Heart left ventricle (tissue), 16 donors: ENCODE measurements at regions of chr10 and their contacts with region 1.

Region 1: GRCh38 chr10:72058989-72059842 is 29.1 kb downstream of the SPOCK2 start:
- DNase-seq: no peak
- ATAC-seq: no peak
- H3K4me3 ChIP-seq: no peak overlapping the region
- H3K27ac ChIP-seq: peak overlapping the region in 2 of 12 donors; percentile 20 to 57
- H3K4me1 ChIP-seq: peaks cover 0 to 19% (median 7%) of the 10 kb centered on the region in 12 donors
- H3K27me3 ChIP-seq: no peaks in the 10 kb centered on the region
- CTCF ChIP-seq: no peak
- POLR2A ChIP-seq: no peak

Region 2: GRCh38 chr10:71319042-71319799 is 740.0 kb before region 1 on chr10 and contains the start of gene SLC29A3:
- intact Hi-C with region 1: no loop called
- DNase-seq: peak; percentile 81 to 92 (median 83)
- ATAC-seq: peak; percentile 56 to 95 (median 90)
- H3K4me3 ChIP-seq: peak within 1 kb of the TSS; percentile 61 to 98 (median 78)
- H3K27ac ChIP-seq: peak within 1 kb of the TSS in 11 of 12 donors; percentile 26 to 83 (median 76)
- H3K4me1 ChIP-seq: peaks cover 0 to 34% (median 11%) of the 10 kb centered on the region in 12 donors
- H3K27me3 ChIP-seq: no peaks in the 10 kb centered on the region
- CTCF ChIP-seq: peak; percentile 23 to 68 (median 49)
- POLR2A ChIP-seq: peak in 1 of 2 donors; percentile 82
- total RNA-seq, gene SLC29A3: 0.76 to 6.2 (median 1.8) TPM

Region 3: GRCh38 chr10:71727738-71728737 is 331.2 kb before region 1 on chr10:
- intact Hi-C with region 1: no loop called
- DNase-seq: peak in 4 of 5 donors; percentile 69 to 86 (median 72)
- ATAC-seq: peak; percentile 60 to 80 (median 69)
- H3K4me3 ChIP-seq: peak overlapping the region in 1 of 12 donors; percentile 0
- H3K27ac ChIP-seq: peak overlapping the region; percentile 18 to 95 (median 76)
- H3K4me1 ChIP-seq: peaks cover 0 to 65% (median 35%) of the 10 kb centered on the region in 12 donors
- H3K27me3 ChIP-seq: no peaks in the 10 kb centered on the region
- CTCF ChIP-seq: no peak
- POLR2A ChIP-seq: no peak

Region 4: GRCh38 chr10:71740069-71740468 is 319.1 kb before region 1 on chr10:
- intact Hi-C with region 1: no loop called
- DNase-seq: peak in 2 of 5 donors; percentile 58 to 76
- ATAC-seq: peak in 3 of 4 donors; percentile 49 to 58 (median 50)
- H3K4me3 ChIP-seq: no peak overlapping the region
- H3K27ac ChIP-seq: peak overlapping the region in 1 of 12 donors; percentile 67
- H3K4me1 ChIP-seq: peaks cover 0 to 99% (median 13%) of the 10 kb centered on the region in 12 donors
- H3K27me3 ChIP-seq: no peaks in the 10 kb centered on the region
- CTCF ChIP-seq: peak in 1 of 12 donors; percentile 8
- POLR2A ChIP-seq: no peak

Region 5: GRCh38 chr10:72107325-72108003 is 48.2 kb after region 1 on chr10:
- intact Hi-C with region 1: loop called in 3 of 10 experiments (anchors 5 to 10 kb)
- DNase-seq: no peak
- ATAC-seq: no peak
- H3K4me3 ChIP-seq: no peak overlapping the region
- H3K27ac ChIP-seq: peak overlapping the region in 3 of 12 donors; percentile 2 to 71 (median 57)
- H3K4me1 ChIP-seq: peaks cover 0 to 45% (median 25%) of the 10 kb centered on the region in 12 donors
- H3K27me3 ChIP-seq: no peaks in the 10 kb centered on the region
- CTCF ChIP-seq: no peak
- POLR2A ChIP-seq: no peak

Region 6: GRCh38 chr10:72215652-72216549 is 156.7 kb after region 1 on chr10 and contains the starts of genes ANAPC16 and ASCC1:
- intact Hi-C with region 1: loop called in 6 of 10 experiments (anchors 5 to 10 kb)
- DNase-seq: peak; percentile 91 to 96 (median 93)
- ATAC-seq: peak; percentile 92 to 99 (median 98)
- H3K4me3 ChIP-seq: peak within 1 kb of the TSS; percentile 62 to 91 (median 72)
- H3K27ac ChIP-seq: peak within 1 kb of the TSS; percentile 91 to 100 (median 98)
- H3K4me1 ChIP-seq: peaks cover 9 to 54% (median 38%) of the 10 kb centered on the region in 12 donors
- H3K27me3 ChIP-seq: no peaks in the 10 kb centered on the region
- CTCF ChIP-seq: peak in 1 of 12 donors; percentile 5
- POLR2A ChIP-seq: peak; percentile 41 to 92
- total RNA-seq, gene ANAPC16: 135 to 237 (median 179) TPM
- total RNA-seq, gene ASCC1: 26.4 to 44.8 (median 35.3) TPM

Region 7: DNA sequence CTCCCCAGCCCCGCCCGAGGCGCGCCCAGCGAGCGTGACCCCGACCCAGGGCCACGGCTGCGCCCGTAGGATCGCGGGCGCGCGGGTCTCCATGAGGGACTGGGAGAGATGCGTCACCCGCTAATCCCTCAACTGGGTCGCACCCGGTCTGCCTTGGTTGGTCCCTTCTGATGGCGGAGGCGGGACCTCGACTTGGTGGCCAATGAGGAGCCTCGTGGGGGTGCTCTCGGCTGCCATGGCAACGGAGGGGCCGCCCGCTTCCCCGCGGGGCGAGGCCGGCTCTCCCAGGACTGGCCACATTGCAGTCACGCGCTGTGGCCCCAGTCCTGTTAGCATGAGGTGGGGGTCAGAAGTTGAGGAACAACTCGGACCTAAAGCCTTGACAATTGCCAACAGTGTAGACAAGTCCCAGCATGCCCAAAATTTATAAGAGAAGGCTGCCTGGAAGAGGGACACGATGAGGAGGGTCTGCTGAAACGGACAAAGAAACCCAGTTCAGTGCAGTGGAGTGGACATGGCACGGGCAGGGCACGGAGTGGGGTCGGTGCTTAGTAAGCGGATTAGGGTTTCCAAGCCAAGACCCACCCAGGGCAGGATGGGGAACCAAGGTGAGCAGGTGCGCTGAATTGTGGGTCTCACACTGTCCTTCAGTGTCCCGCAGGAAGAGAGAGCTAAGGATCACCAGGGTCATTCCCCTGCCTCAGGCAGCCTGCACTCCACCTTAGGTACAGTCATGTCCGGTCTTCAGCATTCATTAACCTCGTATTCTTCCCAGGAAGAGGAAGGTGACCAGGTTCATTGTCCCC is 239.0 kb after region 1 on chr10:
- intact Hi-C with region 1: no loop called
- DNase-seq: peak; percentile 98 to 100 (median 99)
- ATAC-seq: peak; percentile 94 to 98 (median 96)
- H3K4me3 ChIP-seq: peak overlapping the region; percentile 42 to 92 (median 70)
- H3K27ac ChIP-seq: peak overlapping the region; percentile 79 to 99 (median 93)
- H3K4me1 ChIP-seq: peaks cover 0 to 37% (median 11%) of the 10 kb centered on the region in 12 donors
- H3K27me3 ChIP-seq: no peaks in the 10 kb centered on the region
- CTCF ChIP-seq: no peak
- POLR2A ChIP-seq: peak in 1 of 2 donors; percentile 88